ENCODE measurements at regions of chr3 and their contacts with region 1.

Region 1: DNA sequence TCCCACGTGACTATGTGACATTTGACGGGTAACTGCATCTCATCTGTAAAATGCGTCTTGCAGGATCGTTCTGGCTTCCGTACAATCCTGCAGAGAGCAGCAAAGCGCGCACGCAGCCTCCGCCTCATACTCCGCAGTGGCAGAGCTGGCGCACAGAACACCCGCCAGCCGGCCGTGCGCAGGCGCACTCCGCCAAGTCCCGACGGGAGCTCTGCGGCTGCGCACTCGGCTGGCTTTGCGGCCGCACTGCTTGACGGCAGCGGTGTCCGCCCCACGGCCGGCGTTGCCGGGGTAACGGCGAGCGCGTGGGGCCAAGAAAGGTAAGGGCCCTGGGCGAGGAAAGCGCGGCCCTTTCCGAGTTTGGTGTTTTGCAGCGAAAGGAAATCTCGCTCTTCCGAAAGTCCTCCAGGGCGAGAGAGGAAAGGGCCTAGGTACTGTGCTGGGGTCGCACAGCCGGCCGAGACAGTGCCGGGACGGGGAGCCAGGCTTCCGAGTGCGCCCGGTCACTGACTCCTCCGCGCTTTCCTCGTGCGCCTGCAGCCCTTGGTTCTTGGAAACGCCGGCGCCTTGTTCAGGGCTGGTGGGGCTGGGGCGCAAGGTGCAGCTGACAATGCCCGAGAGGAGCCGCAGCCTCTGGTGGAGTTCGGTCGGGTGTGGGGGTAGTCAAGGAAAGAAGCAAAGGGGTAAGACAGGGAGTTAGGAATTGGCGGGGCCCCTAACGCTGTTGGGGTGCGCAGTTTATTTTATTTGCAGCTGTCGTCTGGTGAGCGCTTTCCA is at the start of gene TSEN2:
- DNase-seq: peak; percentile 71 to 95
- H3K4me3 ChIP-seq: peak within 1 kb of the TSS; percentile 56 to 79
- H3K27ac ChIP-seq: peak within 1 kb of the TSS; percentile 42 to 46
- H3K4me1 ChIP-seq: peaks cover 8 to 10% of the 10 kb centered on the region in 2 donors
- H3K27me3 ChIP-seq: no peaks in the 10 kb centered on the region
- CTCF ChIP-seq: peak in 1 of 3 experiments; percentile 33
- total RNA-seq, gene TSEN2: 6.3 TPM

Region 2: GRCh38 chr3:12135029-12135657 is 349.2 kb before region 1 on chr3:
- intact Hi-C with region 1: loop called (anchors 1 kb)
- DNase-seq: peak in 1 of 2 donors; percentile 84
- H3K4me3 ChIP-seq: no peak overlapping the region
- H3K27ac ChIP-seq: no peak overlapping the region
- H3K4me1 ChIP-seq: no peaks in the 10 kb centered on the region
- H3K27me3 ChIP-seq: no peaks in the 10 kb centered on the region
- CTCF ChIP-seq: peak; percentile 85 to 88 (median 87)

Region 3: GRCh38 chr3:12193485-12194165 is 290.8 kb before region 1 on chr3:
- intact Hi-C with region 1: no loop called
- DNase-seq: peak; percentile 66 to 90
- H3K4me3 ChIP-seq: no peak overlapping the region
- H3K27ac ChIP-seq: peak overlapping the region; percentile 72 to 88
- H3K4me1 ChIP-seq: peaks cover 10 to 29% of the 10 kb centered on the region in 2 donors
- H3K27me3 ChIP-seq: no peaks in the 10 kb centered on the region
- CTCF ChIP-seq: no peak

Region 4: GRCh38 chr3:12287727-12288191 is 196.6 kb before region 1 on chr3:
- intact Hi-C with region 1: loop called (anchors 5 kb)
- DNase-seq: no peak
- H3K4me3 ChIP-seq: peak overlapping the region; percentile 66 to 75
- H3K27ac ChIP-seq: peak overlapping the region; percentile 15 to 54
- H3K4me1 ChIP-seq: peaks cover 0 to 10% of the 10 kb centered on the region in 2 donors
- H3K27me3 ChIP-seq: peaks cover 3% of the 10 kb centered on the region
- CTCF ChIP-seq: no peak

Region 5: DNA sequence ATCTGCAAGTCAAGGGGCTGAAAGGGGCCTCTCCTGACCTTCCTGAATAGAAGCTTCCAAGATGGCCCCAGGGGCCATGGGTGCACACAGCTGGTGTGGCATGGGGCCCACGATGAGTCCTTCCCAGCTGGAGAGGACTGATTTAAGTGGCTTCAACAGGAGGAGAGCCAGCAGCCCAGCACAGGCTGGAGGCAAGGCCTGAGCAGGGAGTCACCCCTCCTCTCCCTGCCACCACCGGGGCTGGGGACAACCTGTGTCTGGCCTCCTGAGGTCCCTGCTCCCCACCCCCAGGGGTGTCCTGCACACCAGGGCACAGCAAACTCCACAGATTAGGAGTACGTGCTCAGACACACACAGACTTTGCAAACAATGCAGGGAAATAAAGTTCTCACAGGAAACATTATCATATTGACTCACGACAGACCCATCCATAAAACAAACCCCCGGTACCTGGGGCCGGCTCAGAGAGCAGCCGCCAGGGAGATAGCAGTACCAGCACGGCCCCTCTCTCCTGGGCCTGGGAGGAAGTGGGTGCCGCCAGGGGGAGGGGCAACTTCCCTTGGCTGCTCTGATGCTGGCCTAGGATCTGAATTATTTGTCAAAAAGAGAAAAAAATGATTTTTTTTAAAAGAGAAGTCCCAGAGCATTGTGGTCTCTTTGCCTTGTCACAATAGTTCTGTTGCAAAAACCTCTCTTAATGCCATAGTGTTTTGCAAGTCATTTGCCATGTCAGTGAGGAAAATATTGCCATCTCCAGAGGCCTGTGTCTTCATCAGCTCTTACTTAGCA is 22.0 kb before region 1 on chr3:
- intact Hi-C with region 1: no loop called
- DNase-seq: no peak
- H3K4me3 ChIP-seq: no peak overlapping the region
- H3K27ac ChIP-seq: no peak overlapping the region
- H3K4me1 ChIP-seq: no peaks in the 10 kb centered on the region
- H3K27me3 ChIP-seq: no peaks in the 10 kb centered on the region
- CTCF ChIP-seq: no peak

Region 6: DNA sequence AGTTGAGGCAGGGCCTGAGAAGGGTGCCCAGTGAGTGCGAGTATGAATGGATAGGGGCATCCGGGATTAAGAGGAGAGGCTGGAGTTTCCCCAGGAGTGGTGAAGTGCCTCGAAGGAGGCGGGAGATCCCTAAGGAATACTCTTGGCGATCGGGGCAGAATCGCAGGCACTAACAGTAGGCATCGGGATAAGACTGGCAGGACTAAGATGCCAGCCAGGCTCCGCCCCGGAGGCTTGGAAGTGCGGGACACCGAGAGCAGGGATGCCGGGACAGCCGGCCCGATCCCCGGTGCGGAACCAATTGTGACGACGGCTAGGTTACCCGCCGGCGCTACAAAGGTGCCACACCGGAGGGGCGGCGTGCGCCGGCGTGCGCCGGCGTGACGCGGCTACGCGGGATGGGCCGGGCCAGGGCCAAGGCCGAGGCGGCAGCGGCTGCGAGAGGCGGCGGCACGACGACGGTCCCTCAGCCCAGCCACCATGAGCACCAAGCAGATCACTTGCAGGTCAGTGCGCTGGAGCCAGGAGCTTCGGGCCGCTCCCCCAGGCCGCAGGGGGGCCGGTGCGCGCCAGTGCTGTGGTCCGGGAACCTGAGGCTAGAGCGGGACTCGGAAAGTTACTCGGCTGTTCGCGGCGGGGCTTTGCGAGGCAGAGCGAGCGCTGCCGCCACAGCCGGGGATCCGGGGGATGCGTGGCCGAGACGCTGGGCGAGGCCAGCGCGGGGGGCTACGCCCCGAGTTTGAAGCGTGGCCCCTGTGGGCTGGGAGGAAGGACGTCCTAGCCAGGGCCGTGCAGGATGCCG is 72.5 kb after region 1 on chr3 and contains the start of gene MKRN2:
- intact Hi-C with region 1: loop called (anchors 2 kb)
- DNase-seq: peak; percentile 33 to 92
- H3K4me3 ChIP-seq: peak within 1 kb of the TSS; percentile 61 to 99
- H3K27ac ChIP-seq: peak within 1 kb of the TSS; percentile 92 to 98
- H3K4me1 ChIP-seq: peaks cover 6 to 32% of the 10 kb centered on the region in 2 donors
- H3K27me3 ChIP-seq: no peaks in the 10 kb centered on the region
- CTCF ChIP-seq: no peak
- total RNA-seq, gene MKRN2: 25.2 TPM

Region 7: GRCh38 chr3:14144423-14145075 is 1660.2 kb after region 1 on chr3:
- intact Hi-C with region 1: loop called (anchors 5 kb)
- DNase-seq: peak; percentile 70 to 93
- H3K4me3 ChIP-seq: peak overlapping the region; percentile 33 to 38
- H3K27ac ChIP-seq: peak overlapping the region; percentile 89 to 91
- H3K4me1 ChIP-seq: peaks cover 31 to 49% of the 10 kb centered on the region in 2 donors
- H3K27me3 ChIP-seq: no peaks in the 10 kb centered on the region
- CTCF ChIP-seq: no peak

Measured in ascending aorta (tissue), 2 donors.